Activated T-helper 1 cell treated with anti-CD3 and anti-CD28 coated beads, Interleukin-12 subunit alpha, Interleukin-12 subunit beta, Interleukin-2, Interleukin-4 antibody, amounts not matched to agents 30 ng/mL and 10 ng/mL and 1 ng/mL, durations not matched to agents 14 hours and 24 hours and 36 hours (primary cell): ENCODE measurements at regions of chr1 and their contacts with region 1.

Region 1: DNA sequence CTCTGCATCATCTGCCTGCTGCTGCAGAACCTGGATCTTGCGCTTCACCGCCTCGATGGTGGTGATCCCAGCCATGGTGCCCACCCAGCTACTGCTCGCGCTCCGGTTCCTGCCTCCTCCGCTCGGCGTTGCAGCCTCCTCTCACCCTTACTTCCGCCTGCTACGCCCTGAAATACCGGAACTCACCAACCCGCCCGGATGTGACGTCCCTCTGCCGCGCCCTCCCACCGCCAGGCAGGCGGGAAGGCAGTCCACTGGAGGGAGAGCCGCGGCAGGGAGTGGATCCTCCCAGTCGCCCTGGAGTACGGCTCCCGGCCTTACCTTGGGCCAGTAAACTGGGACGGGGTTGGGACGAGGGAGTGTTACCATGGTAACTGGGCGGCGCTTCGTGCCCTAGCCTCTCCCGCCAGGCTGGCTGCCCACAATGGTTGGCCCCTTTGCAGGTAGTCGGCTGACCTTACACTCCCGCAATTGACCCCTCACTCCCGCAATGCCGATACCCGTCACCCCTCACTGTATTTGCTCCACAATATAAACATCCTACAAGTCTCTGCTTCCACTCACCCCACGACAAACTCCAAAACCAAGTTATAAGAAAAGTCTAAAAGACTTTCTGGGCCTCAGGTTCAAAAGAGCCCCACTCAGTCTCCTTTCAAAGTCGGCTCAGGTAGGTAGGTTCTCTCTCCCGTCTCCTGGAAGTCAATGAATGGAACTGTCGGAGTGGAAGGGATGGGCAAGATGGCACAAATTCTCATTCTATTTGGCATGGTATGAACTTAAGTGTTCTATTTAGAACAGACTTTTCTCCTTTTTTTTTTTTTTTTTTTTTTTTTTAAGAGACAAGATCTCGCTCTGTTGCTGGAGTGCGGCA is 8.6 kb downstream of the TPM3 start:
- DNase-seq: peak; percentile 93
- H3K4me3 Mint-ChIP-seq: peak overlapping the region; percentile 99
- H3K27ac Mint-ChIP-seq: peak overlapping the region; percentile 99
- H3K4me1 Mint-ChIP-seq: peaks cover 53% of the 10 kb centered on the region
- H3K27me3 Mint-ChIP-seq: peaks cover 6% of the 10 kb centered on the region

Region 2: GRCh38 chr1:153922972-153923925 is 260.0 kb before region 1 on chr1 and contains the start of gene GATAD2B:
- intact Hi-C with region 1: loop called (anchors 2 kb)
- DNase-seq: peak; percentile 99
- H3K4me3 Mint-ChIP-seq: peak within 1 kb of the TSS; percentile 97
- H3K27ac Mint-ChIP-seq: peak within 1 kb of the TSS; percentile 92
- H3K4me1 Mint-ChIP-seq: peaks cover 53% of the 10 kb centered on the region
- H3K27me3 Mint-ChIP-seq: peaks cover 2% of the 10 kb centered on the region
- total RNA-seq, gene GATAD2B: 69.1 and 70.4 TPM in 2 replicates

Region 3: GRCh38 chr1:154170547-154171222 is 12.6 kb before region 1 on chr1:
- intact Hi-C with region 1: loop called (anchors 1 kb)
- DNase-seq: no peak
- H3K4me3 Mint-ChIP-seq: peak overlapping the region; percentile 47
- H3K27ac Mint-ChIP-seq: peak overlapping the region; percentile 87
- H3K4me1 Mint-ChIP-seq: peaks cover 46% of the 10 kb centered on the region
- H3K27me3 Mint-ChIP-seq: no peaks in the 10 kb centered on the region

Region 4: GRCh38 chr1:154272217-154272998 is 89.1 kb after region 1 on chr1 and contains the start of gene HAX1:
- intact Hi-C with region 1: loop called (anchors 1 kb)
- DNase-seq: peak; percentile 94
- H3K4me3 Mint-ChIP-seq: peak within 1 kb of the TSS; percentile 98
- H3K27ac Mint-ChIP-seq: peak within 1 kb of the TSS; percentile 97
- H3K4me1 Mint-ChIP-seq: peaks cover 46% of the 10 kb centered on the region
- H3K27me3 Mint-ChIP-seq: no peaks in the 10 kb centered on the region
- total RNA-seq, gene HAX1: 122 and 123 TPM in 2 replicates

Region 5: DNA sequence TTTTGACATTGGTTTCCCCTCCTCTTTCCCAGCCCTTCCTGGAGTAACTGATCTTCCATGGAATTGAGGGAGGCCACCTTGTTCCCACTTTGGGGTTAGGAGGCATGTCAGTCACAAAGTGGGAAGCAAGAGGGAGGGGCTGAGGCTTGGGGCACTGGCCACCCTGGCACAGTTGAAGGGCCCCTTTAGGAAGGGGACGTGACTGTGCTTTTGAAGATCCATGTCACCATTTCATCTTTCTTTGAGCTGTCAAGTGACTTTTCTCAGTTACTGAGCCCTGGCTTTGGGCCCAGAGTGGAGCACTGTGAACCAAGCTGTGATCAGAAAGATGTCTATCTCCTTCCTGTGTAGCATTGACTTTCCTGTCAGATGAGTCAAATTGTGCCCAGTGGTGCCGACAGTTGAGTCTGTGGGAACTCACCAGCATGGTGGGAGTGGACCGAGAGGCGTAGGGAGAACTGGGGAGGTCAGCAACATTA is 280.3 kb after region 1 on chr1:
- intact Hi-C with region 1: loop called (anchors 10 kb)
- DNase-seq: peak; percentile 67
- H3K4me3 Mint-ChIP-seq: peak overlapping the region; percentile 58
- H3K27ac Mint-ChIP-seq: peak overlapping the region; percentile 81
- H3K4me1 Mint-ChIP-seq: peaks cover 65% of the 10 kb centered on the region
- H3K27me3 Mint-ChIP-seq: peaks cover 3% of the 10 kb centered on the region

Region 6: GRCh38 chr1:155135415-155136028 is 952.2 kb after region 1 on chr1 and contains the start of gene SLC50A1:
- intact Hi-C with region 1: loop called (anchors 1 kb)
- DNase-seq: peak; percentile 91
- H3K4me3 Mint-ChIP-seq: peak within 1 kb of the TSS; percentile 94
- H3K27ac Mint-ChIP-seq: peak within 1 kb of the TSS; percentile 99
- H3K4me1 Mint-ChIP-seq: peaks cover 42% of the 10 kb centered on the region
- H3K27me3 Mint-ChIP-seq: peaks cover 5% of the 10 kb centered on the region
- total RNA-seq, gene SLC50A1: 45.7 and 47.7 TPM in 2 replicates